ENCODE measurements at regions of chr1 and their contacts with region 1.

Region 1: GRCh38 chr1:167803358-167804207 is 81.8 kb downstream of the MPZL1 start:
- DNase-seq: peak; percentile 92
- H3K4me3 ChIP-seq: no peak overlapping the region
- H3K27ac ChIP-seq: no peak overlapping the region
- H3K4me1 ChIP-seq: no peaks in the 10 kb centered on the region
- H3K27me3 ChIP-seq: no peaks in the 10 kb centered on the region
- CTCF ChIP-seq: peak; percentile 93 to 95 (median 94)
- POLR2A ChIP-seq: no peak

Region 2: DNA sequence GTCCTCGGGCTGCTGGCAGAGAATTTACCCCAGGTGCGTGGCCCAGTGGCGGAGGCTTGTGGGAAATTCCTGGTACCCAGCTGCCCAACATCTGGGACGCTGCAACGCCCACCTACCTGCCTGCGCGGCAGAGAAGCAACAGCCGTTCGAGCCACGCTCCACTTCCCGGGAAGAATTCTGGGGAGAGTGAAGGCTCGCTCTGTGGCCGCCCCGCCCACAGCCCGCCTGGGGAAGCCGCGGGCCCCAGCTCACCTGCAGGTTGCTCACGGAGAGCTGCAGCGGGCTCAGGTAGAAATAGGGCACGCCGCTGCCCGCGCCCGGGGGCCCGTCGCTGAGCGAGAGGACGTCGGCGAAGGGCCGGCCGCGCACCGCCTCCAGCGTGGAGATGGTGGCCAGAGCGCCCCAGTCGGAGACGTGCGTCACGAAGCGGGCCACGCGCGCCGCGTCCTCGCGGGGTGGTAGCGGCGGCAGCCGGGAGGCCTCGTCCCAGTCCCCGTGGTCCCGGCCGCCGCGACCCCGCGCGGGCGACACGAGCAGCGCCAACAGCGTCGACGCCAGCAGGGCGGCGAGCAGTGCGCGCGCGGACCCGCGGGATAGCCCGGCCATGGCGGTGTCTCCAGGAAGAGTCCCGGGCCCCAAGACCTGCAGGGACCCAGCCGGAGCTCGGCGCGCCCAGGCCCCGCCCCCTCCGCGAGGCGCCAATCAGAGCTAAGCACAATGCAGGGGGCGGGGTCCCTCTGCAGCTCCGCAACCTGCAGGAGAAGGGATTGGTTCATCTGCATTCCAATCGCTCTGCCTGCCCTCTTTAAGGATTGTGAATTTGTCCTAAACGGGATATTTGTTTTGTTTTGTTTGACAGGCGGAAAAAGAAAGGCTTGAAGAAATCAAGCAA is 250.2 kb before region 1 on chr1 and contains the start of gene CREG1:
- intact Hi-C with region 1: loop called (anchors 10 kb)
- DNase-seq: peak; percentile 96
- H3K4me3 ChIP-seq: peak within 1 kb of the TSS; percentile 83 to 86
- H3K27ac ChIP-seq: peak within 1 kb of the TSS; percentile 82 to 89
- H3K4me1 ChIP-seq: no peaks in the 10 kb centered on the region
- H3K27me3 ChIP-seq: no peaks in the 10 kb centered on the region
- CTCF ChIP-seq: peak in 2 of 4 experiments; percentile 36 to 38
- POLR2A ChIP-seq: peak; percentile 95
- total RNA-seq, gene CREG1: 132 to 204 TPM

Region 3: GRCh38 chr1:167721617-167722151 is 81.9 kb before region 1 on chr1 and contains the start of gene MPZL1:
- intact Hi-C with region 1: loop called (anchors 2 kb)
- DNase-seq: peak; percentile 97
- H3K4me3 ChIP-seq: peak within 1 kb of the TSS; percentile 92 to 98
- H3K27ac ChIP-seq: peak within 1 kb of the TSS; percentile 85 to 88
- H3K4me1 ChIP-seq: no peaks in the 10 kb centered on the region
- H3K27me3 ChIP-seq: no peaks in the 10 kb centered on the region
- CTCF ChIP-seq: peak in 1 of 4 experiments; percentile 19
- POLR2A ChIP-seq: peak; percentile 86
- total RNA-seq, gene MPZL1: 52.5 to 135 TPM

Region 4: GRCh38 chr1:168082008-168082876 is 278.7 kb after region 1 on chr1:
- intact Hi-C with region 1: loop called (anchors 5 kb)
- DNase-seq: peak; percentile 61
- H3K4me3 ChIP-seq: no peak overlapping the region
- H3K27ac ChIP-seq: peak overlapping the region; percentile 9 to 20
- H3K4me1 ChIP-seq: no peaks in the 10 kb centered on the region
- H3K27me3 ChIP-seq: no peaks in the 10 kb centered on the region
- CTCF ChIP-seq: peak; percentile 70 to 82 (median 76)
- POLR2A ChIP-seq: no peak

Measured in prostate gland (tissue), 2 donors.